Naive thymus-derived CD4-positive, alpha-beta T cell (primary cell): ENCODE measurements at regions of chr5 and their contacts with region 1.

Region 1: GRCh38 chr5:57298295-57298984 is 124.6 kb downstream of the GPBP1 start:
- DNase-seq: peak; percentile 56 to 85 (median 79)
- ATAC-seq: peak; percentile 94
- H3K4me3 ChIP-seq: peak overlapping the region; percentile 34
- H3K4me3 Mint-ChIP-seq: peak overlapping the region; percentile 72 to 80 (median 77)
- H3K27ac ChIP-seq: peak overlapping the region; percentile 26
- H3K27ac Mint-ChIP-seq: peak overlapping the region in 8 of 9 donors; percentile 13 to 90 (median 56)
- H3K4me1 ChIP-seq: peaks cover 8 to 9% of the 10 kb centered on the region in 2 donors
- H3K4me1 Mint-ChIP-seq: peaks cover 6 to 22% (median 14%) of the 10 kb centered on the region in 7 donors
- H3K27me3 ChIP-seq: no peaks in the 10 kb centered on the region
- H3K27me3 Mint-ChIP-seq: peaks cover 0 to 5% (median 0%) of the 10 kb centered on the region in 5 donors

Region 2: GRCh38 chr5:57383093-57383861 is 84.8 kb after region 1 on chr5:
- CTCF ChIA-PET with region 1: no interaction called
- POLR2A ChIA-PET with region 1: no interaction called
- intact Hi-C with region 1: loop called in 1 of 2 experiments (anchors 5 kb)
- DNase-seq: peak in 1 of 9 donors; percentile 35
- ATAC-seq: peak; percentile 31
- H3K4me3 ChIP-seq: no peak overlapping the region
- H3K4me3 Mint-ChIP-seq: peak overlapping the region in 1 of 10 donors; percentile 5
- H3K27ac ChIP-seq: no peak overlapping the region
- H3K27ac Mint-ChIP-seq: peak overlapping the region in 1 of 9 donors; percentile 46
- H3K4me1 ChIP-seq: no peaks in the 10 kb centered on the region
- H3K4me1 Mint-ChIP-seq: peaks cover 2 to 12% (median 8%) of the 10 kb centered on the region in 7 donors
- H3K27me3 ChIP-seq: no peaks in the 10 kb centered on the region
- H3K27me3 Mint-ChIP-seq: peaks cover 0 to 3% (median 0%) of the 10 kb centered on the region in 5 donors

Region 3: DNA sequence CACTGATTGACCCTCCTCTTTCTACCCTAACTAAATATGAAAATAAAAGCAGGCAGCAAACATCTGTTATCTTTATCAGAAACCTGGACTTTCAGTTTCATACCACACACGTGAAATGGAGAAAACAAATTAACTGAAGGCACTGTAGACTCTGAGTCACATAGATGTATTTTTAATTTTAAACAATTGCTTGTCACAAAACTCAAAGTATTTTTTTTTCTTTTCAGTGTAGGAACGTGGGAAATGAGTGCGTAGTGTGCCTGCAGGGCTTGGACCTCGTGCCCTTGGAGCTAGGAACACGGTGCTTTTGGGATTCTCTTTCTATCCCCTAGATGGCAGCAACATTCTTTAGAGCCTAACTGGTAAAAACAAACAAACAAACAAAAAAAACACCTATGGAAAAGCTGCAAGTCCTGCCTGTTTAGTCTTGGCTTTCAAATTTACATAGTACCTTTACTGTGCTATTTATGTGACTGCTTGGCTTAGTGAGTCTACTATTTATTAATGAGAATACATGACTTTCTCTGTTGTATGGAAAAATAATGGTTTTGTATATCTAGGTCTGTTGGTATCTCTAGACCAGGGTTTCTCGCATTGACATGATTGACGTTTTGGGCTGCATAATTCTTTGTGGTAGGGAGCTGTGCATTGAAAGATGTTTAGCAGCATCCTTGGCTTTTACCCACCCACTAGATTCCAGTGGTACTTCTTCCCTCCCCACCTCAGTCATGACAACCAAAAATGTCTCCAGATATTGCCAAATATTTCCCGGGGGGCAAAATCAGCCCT is 201.0 kb after region 1 on chr5:
- CTCF ChIA-PET with region 1: interaction called, 6 read pairs
- POLR2A ChIA-PET with region 1: no interaction called
- intact Hi-C with region 1: loop called (anchors 1 kb)
- DNase-seq: peak in 5 of 9 donors; percentile 8 to 25 (median 21)
- ATAC-seq: peak; percentile 44
- H3K4me3 ChIP-seq: peak overlapping the region; percentile 28
- H3K4me3 Mint-ChIP-seq: peak overlapping the region; percentile 8 to 78 (median 66)
- H3K27ac ChIP-seq: no peak overlapping the region
- H3K27ac Mint-ChIP-seq: peak overlapping the region in 4 of 9 donors; percentile 39 to 74 (median 68)
- H3K4me1 ChIP-seq: peaks cover 0 to 16% of the 10 kb centered on the region in 2 donors
- H3K4me1 Mint-ChIP-seq: peaks cover 18 to 44% (median 32%) of the 10 kb centered on the region in 7 donors
- H3K27me3 ChIP-seq: no peaks in the 10 kb centered on the region
- H3K27me3 Mint-ChIP-seq: peaks cover 0 to 2% (median 0%) of the 10 kb centered on the region in 5 donors

Region 4: GRCh38 chr5:57779383-57780223 is 481.2 kb after region 1 on chr5:
- CTCF ChIA-PET with region 1: interaction called, 3 read pairs
- POLR2A ChIA-PET with region 1: no interaction called
- intact Hi-C with region 1: loop called (anchors 1 to 5 kb)
- DNase-seq: peak in 5 of 9 donors; percentile 8 to 26 (median 18)
- ATAC-seq: peak; percentile 58
- H3K4me3 ChIP-seq: no peak overlapping the region
- H3K4me3 Mint-ChIP-seq: no peak overlapping the region
- H3K27ac ChIP-seq: no peak overlapping the region
- H3K27ac Mint-ChIP-seq: no peak overlapping the region
- H3K4me1 ChIP-seq: no peaks in the 10 kb centered on the region
- H3K4me1 Mint-ChIP-seq: no peaks in the 10 kb centered on the region
- H3K27me3 ChIP-seq: no peaks in the 10 kb centered on the region
- H3K27me3 Mint-ChIP-seq: peaks cover 0 to 4% (median 0%) of the 10 kb centered on the region in 5 donors

Region 5: DNA sequence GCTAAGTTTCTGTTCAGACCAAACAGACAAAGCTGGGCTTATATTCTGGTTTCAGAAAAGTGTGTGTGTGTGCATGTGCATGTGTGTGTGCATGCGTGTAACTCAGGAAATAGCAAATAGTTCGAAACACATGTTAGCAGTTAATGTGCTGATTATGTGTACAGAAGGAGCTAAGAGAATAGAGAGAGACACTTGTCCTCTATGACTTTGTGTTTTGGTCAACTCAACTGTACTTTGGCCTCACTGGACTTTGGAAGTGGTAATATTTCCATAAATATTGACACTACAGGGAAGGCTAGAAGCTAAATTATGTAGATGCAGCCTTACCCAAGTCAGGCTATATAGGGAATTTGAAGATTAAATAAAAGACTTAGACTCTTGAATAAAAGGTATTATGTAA is 1439.9 kb after region 1 on chr5:
- CTCF ChIA-PET with region 1: no interaction called
- POLR2A ChIA-PET with region 1: no interaction called
- intact Hi-C with region 1: no loop called
- DNase-seq: no peak
- ATAC-seq: no peak
- H3K4me3 ChIP-seq: no peak overlapping the region
- H3K4me3 Mint-ChIP-seq: no peak overlapping the region
- H3K27ac ChIP-seq: no peak overlapping the region
- H3K27ac Mint-ChIP-seq: no peak overlapping the region
- H3K4me1 ChIP-seq: no peaks in the 10 kb centered on the region
- H3K4me1 Mint-ChIP-seq: no peaks in the 10 kb centered on the region
- H3K27me3 ChIP-seq: no peaks in the 10 kb centered on the region
- H3K27me3 Mint-ChIP-seq: peaks cover 0 to 13% (median 6%) of the 10 kb centered on the region in 5 donors

Region 6: DNA sequence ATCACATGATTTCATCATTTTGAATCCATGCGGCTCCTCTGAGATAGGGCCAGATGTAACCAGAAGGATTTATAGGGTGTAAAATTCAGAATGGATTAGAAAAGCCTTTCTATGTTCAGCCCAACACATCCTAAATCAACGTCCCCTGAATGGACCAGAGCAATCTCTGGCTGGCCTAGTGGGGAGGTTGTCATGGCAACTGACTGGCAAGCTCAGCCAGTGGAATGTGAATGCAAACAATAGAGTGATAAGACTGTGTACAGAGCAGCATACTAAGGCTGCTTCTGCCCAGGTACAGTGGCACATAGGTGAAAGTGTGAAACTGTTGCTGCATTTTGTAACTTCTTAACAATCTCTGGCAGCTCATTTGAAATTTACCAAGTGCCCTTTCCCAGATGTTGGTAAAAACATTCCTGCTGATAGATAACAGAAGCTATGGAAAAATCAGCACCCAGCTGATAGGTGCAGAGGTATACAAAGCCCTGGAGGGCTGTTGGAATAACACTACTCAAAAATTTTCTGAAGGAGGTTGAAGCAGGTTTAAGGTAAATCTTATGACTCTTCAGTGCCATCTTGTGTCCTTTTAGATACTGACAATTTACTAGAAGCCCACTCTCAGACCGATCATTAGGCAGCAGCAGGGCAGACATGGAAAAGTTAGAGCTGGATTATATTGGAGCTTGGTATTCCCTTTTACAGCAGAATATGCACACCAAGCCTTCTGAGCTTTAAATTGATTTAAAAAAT is 1551.7 kb after region 1 on chr5:
- CTCF ChIA-PET with region 1: no interaction called
- POLR2A ChIA-PET with region 1: no interaction called
- intact Hi-C with region 1: loop called (anchors 1 to 2 kb)
- DNase-seq: peak in 2 of 9 donors; percentile 2
- ATAC-seq: peak; percentile 49
- H3K4me3 ChIP-seq: no peak overlapping the region
- H3K4me3 Mint-ChIP-seq: no peak overlapping the region
- H3K27ac ChIP-seq: no peak overlapping the region
- H3K27ac Mint-ChIP-seq: no peak overlapping the region
- H3K4me1 ChIP-seq: no peaks in the 10 kb centered on the region
- H3K4me1 Mint-ChIP-seq: no peaks in the 10 kb centered on the region
- H3K27me3 ChIP-seq: no peaks in the 10 kb centered on the region
- H3K27me3 Mint-ChIP-seq: peaks cover 11 to 26% (median 21%) of the 10 kb centered on the region in 5 donors